Naive thymus-derived CD4-positive, alpha-beta T cell (primary cell): ENCODE measurements at regions of chr4 and their contacts with region 1.

Region 1: DNA sequence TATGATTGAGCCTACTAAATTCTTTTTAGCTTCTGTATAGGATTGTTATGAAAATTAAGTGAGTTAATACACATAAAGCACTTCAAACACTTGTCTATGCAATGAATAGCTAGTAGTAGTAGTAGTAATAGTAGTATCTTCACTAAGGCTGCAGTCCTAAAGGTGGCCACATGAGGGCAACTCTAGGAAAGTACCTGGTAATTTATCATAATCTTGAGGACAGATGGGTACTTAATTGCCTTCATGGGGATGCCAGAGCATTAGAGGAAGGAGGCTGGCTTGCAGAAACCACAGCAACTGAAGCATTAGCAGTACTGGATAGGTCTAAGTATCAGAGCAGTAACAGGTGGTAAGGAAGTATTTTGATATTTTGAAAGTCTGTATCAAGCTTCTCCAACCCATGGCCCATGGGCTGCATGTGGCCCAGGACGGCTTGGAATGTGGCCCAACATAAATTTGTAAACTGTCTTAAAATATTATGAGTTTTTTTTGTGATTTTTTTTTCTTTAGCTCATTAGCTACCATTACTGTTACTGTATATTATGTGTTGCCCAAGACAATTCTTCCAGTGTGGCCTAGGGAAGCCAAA is 17.3 kb downstream of the NIPAL1 start:
- DNase-seq: peak in 7 of 9 donors; percentile 21 to 55 (median 52)
- ATAC-seq: peak; percentile 91
- H3K4me3 ChIP-seq: no peak overlapping the region
- H3K4me3 Mint-ChIP-seq: no peak overlapping the region
- H3K27ac ChIP-seq: no peak overlapping the region
- H3K27ac Mint-ChIP-seq: no peak overlapping the region
- H3K4me1 ChIP-seq: peaks cover 3 to 4% of the 10 kb centered on the region in 2 donors
- H3K4me1 Mint-ChIP-seq: peaks cover 4 to 22% (median 15%) of the 10 kb centered on the region in 7 donors
- H3K27me3 ChIP-seq: no peaks in the 10 kb centered on the region
- H3K27me3 Mint-ChIP-seq: no peaks in the 10 kb centered on the region

Region 2: DNA sequence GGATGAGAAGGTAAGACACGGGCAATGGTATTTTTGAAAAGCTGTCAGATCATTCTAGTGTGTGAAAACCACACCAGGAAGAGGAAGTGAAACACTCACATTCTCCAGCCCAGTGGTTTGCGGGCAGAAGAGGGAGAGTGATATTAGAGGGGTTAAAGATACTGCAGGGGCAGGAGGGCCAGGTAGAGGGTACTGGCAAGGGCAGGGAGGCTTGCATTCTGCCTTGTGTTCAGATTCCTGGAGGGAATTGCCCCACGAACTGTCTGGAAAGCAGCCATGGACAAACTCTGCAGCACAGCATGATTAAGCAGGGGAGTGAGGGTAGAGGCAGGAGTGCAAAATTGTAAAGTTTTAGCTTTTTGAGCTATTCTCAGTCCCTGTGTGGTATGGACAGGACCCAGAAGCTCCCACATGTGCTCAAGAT is 13.5 kb after region 1 on chr4:
- CTCF ChIA-PET with region 1: interaction called, 8 read pairs
- POLR2A ChIA-PET with region 1: interaction called, 4 read pairs
- intact Hi-C with region 1: loop called (anchors 1 kb)
- DNase-seq: peak in 8 of 9 donors; percentile 7 to 74 (median 32)
- ATAC-seq: peak; percentile 89
- H3K4me3 ChIP-seq: no peak overlapping the region
- H3K4me3 Mint-ChIP-seq: peak overlapping the region; percentile 38 to 83 (median 72)
- H3K27ac ChIP-seq: no peak overlapping the region
- H3K27ac Mint-ChIP-seq: peak overlapping the region in 7 of 9 donors; percentile 2 to 66 (median 45)
- H3K4me1 ChIP-seq: peaks cover 28 to 34% of the 10 kb centered on the region in 2 donors
- H3K4me1 Mint-ChIP-seq: peaks cover 35 to 61% (median 47%) of the 10 kb centered on the region in 7 donors
- H3K27me3 ChIP-seq: no peaks in the 10 kb centered on the region
- H3K27me3 Mint-ChIP-seq: peaks cover 0 to 79% (median 0%) of the 10 kb centered on the region in 5 donors